CD8-positive, alpha-beta T cell (primary cell): ENCODE measurements at regions of chr9 and their contacts with region 1.

Region 1: DNA sequence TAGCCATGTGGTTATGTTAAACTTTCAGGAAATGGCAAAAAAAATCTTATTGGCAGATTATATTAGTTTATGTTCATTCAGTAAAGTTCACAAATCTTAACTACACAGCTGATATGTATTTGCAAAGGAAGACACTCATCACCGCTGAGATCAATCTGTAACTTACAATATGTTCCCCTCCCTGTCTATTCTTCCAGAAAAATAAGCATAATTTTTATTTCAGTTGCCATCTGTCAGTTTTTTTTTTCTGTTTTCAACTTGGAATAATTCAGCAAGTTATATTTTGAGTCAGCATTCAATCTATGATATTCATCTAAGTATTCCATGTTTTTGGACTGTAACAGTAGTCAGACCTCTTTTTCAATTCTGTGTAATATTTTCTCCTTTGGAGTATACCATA is 1019.9 kb upstream of the PTPRD start:
- DNase-seq: no peak
- ATAC-seq: no peak
- H3K4me3 ChIP-seq: no peak overlapping the region
- H3K4me3 Mint-ChIP-seq: no peak overlapping the region
- H3K27ac ChIP-seq: no peak overlapping the region
- H3K27ac Mint-ChIP-seq: no peak overlapping the region
- H3K4me1 ChIP-seq: no peaks in the 10 kb centered on the region
- H3K4me1 Mint-ChIP-seq: no peaks in the 10 kb centered on the region
- H3K27me3 ChIP-seq: no peaks in the 10 kb centered on the region
- H3K27me3 Mint-ChIP-seq: no peaks in the 10 kb centered on the region
- CTCF ChIP-seq: no peak

Region 2: DNA sequence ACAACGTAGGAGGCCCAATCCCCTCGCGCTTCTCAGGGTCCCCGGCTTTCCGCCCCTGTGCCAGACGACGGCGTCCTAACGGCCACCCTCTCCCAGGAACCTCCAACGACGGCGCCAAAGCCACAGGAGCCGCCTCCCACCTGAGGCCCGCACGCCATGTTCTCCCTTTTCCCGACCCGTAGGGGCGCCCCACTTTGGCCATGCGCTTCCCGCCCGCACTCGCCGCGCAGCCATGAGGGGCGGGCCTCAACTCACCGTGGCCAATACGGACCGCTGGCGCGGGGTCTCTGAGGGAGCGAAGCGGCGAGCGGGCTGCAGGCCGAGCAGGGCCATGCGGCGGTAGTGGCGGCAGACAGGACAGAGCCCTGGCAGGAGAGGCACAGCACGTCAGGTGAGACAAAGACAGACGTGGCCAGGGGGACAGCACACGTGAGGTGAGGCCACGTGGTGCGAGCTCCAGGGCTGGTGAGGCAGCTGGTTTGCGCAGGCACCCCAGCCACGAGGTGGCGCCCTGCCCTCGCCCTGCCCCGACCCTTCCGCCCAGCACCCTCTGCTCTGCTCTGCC is 14.4 kb before region 1 on chr9:
- CTCF ChIA-PET with region 1: no interaction called
- POLR2A ChIA-PET with region 1: no interaction called
- intact Hi-C with region 1: loop called in 1 of 2 experiments (anchors 2 kb)
- DNase-seq: peak in 1 of 9 experiments; percentile 2
- ATAC-seq: no peak
- H3K4me3 ChIP-seq: no peak overlapping the region
- H3K4me3 Mint-ChIP-seq: no peak overlapping the region
- H3K27ac ChIP-seq: no peak overlapping the region
- H3K27ac Mint-ChIP-seq: no peak overlapping the region
- H3K4me1 ChIP-seq: no peaks in the 10 kb centered on the region
- H3K4me1 Mint-ChIP-seq: no peaks in the 10 kb centered on the region
- H3K27me3 ChIP-seq: no peaks in the 10 kb centered on the region
- H3K27me3 Mint-ChIP-seq: no peaks in the 10 kb centered on the region
- CTCF ChIP-seq: no peak